CD4-positive, alpha-beta memory T cell (primary cell): ENCODE measurements at regions of chr5 and their contacts with region 1.

Region 1: GRCh38 chr5:131417240-131417869 is 153.5 kb downstream of the CDC42SE2 start:
- DNase-seq: peak; percentile 71 to 79 (median 77)
- H3K4me3 ChIP-seq: no peak overlapping the region
- H3K4me3 Mint-ChIP-seq: peak overlapping the region in 7 of 8 donors; percentile 5 to 81 (median 60)
- H3K27ac ChIP-seq: peak overlapping the region; percentile 45
- H3K27ac Mint-ChIP-seq: peak overlapping the region; percentile 68 to 92 (median 85)
- H3K4me1 ChIP-seq: peaks cover 37% of the 10 kb centered on the region
- H3K4me1 Mint-ChIP-seq: peaks cover 35 to 56% (median 46%) of the 10 kb centered on the region in 4 donors
- H3K27me3 ChIP-seq: no peaks in the 10 kb centered on the region
- H3K27me3 Mint-ChIP-seq: no peaks in the 10 kb centered on the region

Region 2: DNA sequence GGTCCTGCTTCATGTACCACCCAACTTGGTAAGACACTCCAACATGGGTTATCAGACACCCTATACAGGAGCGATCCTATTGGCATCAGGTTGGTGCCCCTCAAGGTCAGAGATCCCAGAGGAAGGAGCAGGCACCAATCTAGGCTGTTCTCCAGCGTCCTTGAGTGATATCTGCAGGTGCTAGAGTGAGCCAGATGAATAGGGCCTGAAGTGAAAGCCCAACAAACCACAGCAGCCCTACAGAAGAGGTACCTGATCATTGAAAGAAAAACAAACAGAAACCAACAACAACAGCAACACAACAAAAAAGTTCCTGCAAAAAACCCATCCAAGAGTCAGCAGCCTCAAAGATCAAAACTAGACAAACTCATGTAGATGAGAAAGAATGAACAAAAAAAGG is 837.1 kb before region 1 on chr5:
- CTCF ChIA-PET with region 1: no interaction called
- POLR2A ChIA-PET with region 1: no interaction called
- intact Hi-C with region 1: loop called (anchors 10 kb)
- DNase-seq: no peak
- H3K4me3 ChIP-seq: no peak overlapping the region
- H3K4me3 Mint-ChIP-seq: no peak overlapping the region
- H3K27ac ChIP-seq: no peak overlapping the region
- H3K27ac Mint-ChIP-seq: no peak overlapping the region
- H3K4me1 ChIP-seq: no peaks in the 10 kb centered on the region
- H3K4me1 Mint-ChIP-seq: no peaks in the 10 kb centered on the region
- H3K27me3 ChIP-seq: no peaks in the 10 kb centered on the region
- H3K27me3 Mint-ChIP-seq: peaks cover 0 to 3% of the 10 kb centered on the region in 2 donors

Region 3: GRCh38 chr5:131068893-131069643 is 348.3 kb before region 1 on chr5:
- CTCF ChIA-PET with region 1: no interaction called
- POLR2A ChIA-PET with region 1: no interaction called
- intact Hi-C with region 1: loop called (anchors 1 kb)
- DNase-seq: peak; percentile 63 to 73 (median 71)
- H3K4me3 ChIP-seq: no peak overlapping the region
- H3K4me3 Mint-ChIP-seq: peak overlapping the region; percentile 30 to 82 (median 72)
- H3K27ac ChIP-seq: peak overlapping the region; percentile 23
- H3K27ac Mint-ChIP-seq: peak overlapping the region; percentile 72 to 95 (median 83)
- H3K4me1 ChIP-seq: peaks cover 44% of the 10 kb centered on the region
- H3K4me1 Mint-ChIP-seq: peaks cover 38 to 55% (median 44%) of the 10 kb centered on the region in 4 donors
- H3K27me3 ChIP-seq: no peaks in the 10 kb centered on the region
- H3K27me3 Mint-ChIP-seq: no peaks in the 10 kb centered on the region

Region 4: DNA sequence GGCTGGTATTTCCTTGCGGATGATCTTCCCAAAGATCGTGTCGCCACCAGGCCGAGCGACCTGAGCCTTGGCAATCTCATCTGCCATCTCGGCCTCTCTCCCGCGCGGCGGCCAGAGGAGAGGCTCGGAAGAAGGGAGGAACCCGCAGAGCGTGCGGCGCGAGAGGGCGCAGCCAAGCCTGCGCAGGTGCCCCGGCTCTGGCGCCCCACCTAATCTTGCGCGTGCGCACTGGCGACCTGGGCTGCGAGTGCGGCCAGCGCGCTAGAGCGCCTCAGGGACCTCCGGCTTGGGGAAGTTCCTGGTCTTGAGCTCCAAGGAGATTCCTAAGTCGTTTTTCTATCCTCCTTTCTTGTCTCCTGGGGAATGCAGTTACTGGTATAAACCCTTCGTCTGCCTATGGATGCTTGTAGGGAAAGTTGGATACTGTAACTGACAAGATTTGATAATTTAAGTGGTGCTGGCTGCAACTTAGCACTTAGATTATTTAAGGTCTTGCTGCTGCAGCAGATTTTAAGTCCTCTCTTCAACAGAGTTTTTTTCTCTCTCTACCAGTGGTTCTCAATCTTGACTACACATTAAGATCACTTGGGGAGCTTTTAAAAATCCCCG is 252.1 kb before region 1 on chr5 and contains the start of gene HINT1:
- CTCF ChIA-PET with region 1: interaction called, 11 read pairs
- POLR2A ChIA-PET with region 1: interaction called, 13 read pairs
- intact Hi-C with region 1: loop called (anchors 1 kb)
- DNase-seq: peak; percentile 86 to 92 (median 91)
- H3K4me3 ChIP-seq: peak within 1 kb of the TSS; percentile 31 to 89
- H3K4me3 Mint-ChIP-seq: peak within 1 kb of the TSS; percentile 94 to 98 (median 98)
- H3K27ac ChIP-seq: peak within 1 kb of the TSS; percentile 96
- H3K27ac Mint-ChIP-seq: peak within 1 kb of the TSS; percentile 89 to 99 (median 98)
- H3K4me1 ChIP-seq: peaks cover 49% of the 10 kb centered on the region
- H3K4me1 Mint-ChIP-seq: peaks cover 37 to 78% (median 52%) of the 10 kb centered on the region in 4 donors
- H3K27me3 ChIP-seq: no peaks in the 10 kb centered on the region
- H3K27me3 Mint-ChIP-seq: no peaks in the 10 kb centered on the region
- total RNA-seq, gene HINT1: 278 to 289 TPM

Region 5: DNA sequence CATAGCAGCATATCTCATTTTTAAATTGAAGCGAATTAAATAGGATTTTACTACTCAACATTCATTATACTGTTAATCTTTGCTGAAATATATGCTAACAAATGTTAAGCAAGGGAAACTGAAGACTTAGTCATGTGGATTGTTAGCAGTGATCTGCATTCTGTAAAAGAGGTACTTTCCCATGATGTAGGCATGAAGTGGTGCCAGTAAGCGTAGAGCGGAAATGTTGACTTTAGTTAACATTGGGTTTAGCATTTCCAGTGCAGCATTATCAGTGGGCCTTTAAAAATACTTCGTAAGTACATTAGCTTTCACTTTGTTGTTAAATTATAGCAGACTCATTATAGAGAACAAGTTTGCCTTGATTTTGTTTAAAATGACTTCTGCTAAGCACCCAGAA is 23.2 kb before region 1 on chr5:
- CTCF ChIA-PET with region 1: interaction called, 20 read pairs
- POLR2A ChIA-PET with region 1: interaction called, 39 read pairs
- intact Hi-C with region 1: loop called (anchors 2 kb)
- DNase-seq: peak; percentile 75 to 88 (median 83)
- H3K4me3 ChIP-seq: no peak overlapping the region
- H3K4me3 Mint-ChIP-seq: peak overlapping the region; percentile 41 to 79 (median 73)
- H3K27ac ChIP-seq: peak overlapping the region; percentile 85
- H3K27ac Mint-ChIP-seq: peak overlapping the region; percentile 95 to 99 (median 97)
- H3K4me1 ChIP-seq: peaks cover 77% of the 10 kb centered on the region
- H3K4me1 Mint-ChIP-seq: peaks cover 67 to 93% (median 80%) of the 10 kb centered on the region in 4 donors
- H3K27me3 ChIP-seq: no peaks in the 10 kb centered on the region
- H3K27me3 Mint-ChIP-seq: no peaks in the 10 kb centered on the region

Region 6: GRCh38 chr5:131735393-131735792 is 318.0 kb after region 1 on chr5:
- CTCF ChIA-PET with region 1: no interaction called
- POLR2A ChIA-PET with region 1: no interaction called
- intact Hi-C with region 1: no loop called
- DNase-seq: no peak
- H3K4me3 ChIP-seq: no peak overlapping the region
- H3K4me3 Mint-ChIP-seq: no peak overlapping the region
- H3K27ac ChIP-seq: no peak overlapping the region
- H3K27ac Mint-ChIP-seq: no peak overlapping the region
- H3K4me1 ChIP-seq: no peaks in the 10 kb centered on the region
- H3K4me1 Mint-ChIP-seq: peaks cover 0 to 5% (median 2%) of the 10 kb centered on the region in 4 donors
- H3K27me3 ChIP-seq: no peaks in the 10 kb centered on the region
- H3K27me3 Mint-ChIP-seq: no peaks in the 10 kb centered on the region

Region 7: DNA sequence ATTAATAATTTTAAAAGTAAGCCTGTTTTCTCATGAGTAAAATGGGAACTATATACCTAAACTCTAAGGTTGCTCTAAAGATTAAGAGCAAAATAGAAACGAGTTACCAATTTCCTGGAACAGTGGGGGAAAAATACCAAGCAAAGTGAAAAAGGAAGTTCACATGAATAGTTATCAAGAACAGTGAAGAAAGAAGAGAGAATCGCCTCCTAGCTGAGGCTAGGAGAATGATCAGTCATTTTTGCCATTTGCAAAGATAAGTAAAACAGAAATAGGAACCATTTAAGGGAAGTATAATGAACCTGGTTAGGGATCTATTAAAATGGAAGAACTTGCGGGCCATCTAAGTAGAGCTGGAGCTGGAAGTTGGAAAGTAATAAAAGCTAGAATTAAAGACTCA is 759.6 kb after region 1 on chr5:
- CTCF ChIA-PET with region 1: no interaction called
- POLR2A ChIA-PET with region 1: no interaction called
- intact Hi-C with region 1: no loop called
- DNase-seq: peak in 1 of 5 donors; percentile 2
- H3K4me3 ChIP-seq: no peak overlapping the region
- H3K4me3 Mint-ChIP-seq: peak overlapping the region in 1 of 8 donors; percentile 2
- H3K27ac ChIP-seq: no peak overlapping the region
- H3K27ac Mint-ChIP-seq: peak overlapping the region in 2 of 7 donors; percentile 5 to 81
- H3K4me1 ChIP-seq: peaks cover 11% of the 10 kb centered on the region
- H3K4me1 Mint-ChIP-seq: peaks cover 18 to 30% (median 24%) of the 10 kb centered on the region in 4 donors
- H3K27me3 ChIP-seq: no peaks in the 10 kb centered on the region
- H3K27me3 Mint-ChIP-seq: no peaks in the 10 kb centered on the region